ENCODE measurements at regions of chr20 and their contacts with region 1.

Region 1: DNA sequence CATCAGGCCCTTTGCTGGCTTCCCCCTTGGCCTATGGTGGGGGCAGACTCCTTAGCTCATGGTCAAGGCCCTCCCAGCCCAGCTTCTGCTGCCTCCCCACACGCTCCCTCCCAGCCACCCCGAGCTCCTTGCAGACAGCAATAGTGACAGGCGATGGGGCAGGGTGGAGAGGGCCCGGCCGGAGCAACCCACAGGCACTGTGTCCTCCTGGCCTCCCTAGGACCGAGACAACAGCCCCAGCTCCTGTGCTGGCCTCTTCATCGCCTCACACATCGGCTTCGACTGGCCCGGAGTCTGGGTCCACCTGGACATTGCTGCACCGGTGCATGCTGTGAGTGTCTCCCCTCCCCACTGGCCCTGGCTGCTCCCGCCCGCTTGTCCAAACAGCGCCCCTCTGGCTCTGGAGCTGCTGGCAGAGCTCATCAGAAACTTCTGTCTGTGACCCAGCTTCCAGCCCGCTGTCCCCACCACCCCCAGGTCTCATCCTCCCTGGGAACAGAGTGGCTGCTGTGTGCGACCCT is 21.8 kb downstream of the NPEPL1 start:
- DNase-seq: peak in 4 of 5 donors; percentile 7 to 52 (median 16)
- ATAC-seq: no peak
- H3K4me3 ChIP-seq: no peak overlapping the region
- H3K27ac ChIP-seq: no peak overlapping the region
- H3K4me1 ChIP-seq: no peaks in the 10 kb centered on the region
- H3K27me3 ChIP-seq: no peaks in the 10 kb centered on the region
- CTCF ChIP-seq: no peak
- POLR2A ChIP-seq: no peak

Region 2: DNA sequence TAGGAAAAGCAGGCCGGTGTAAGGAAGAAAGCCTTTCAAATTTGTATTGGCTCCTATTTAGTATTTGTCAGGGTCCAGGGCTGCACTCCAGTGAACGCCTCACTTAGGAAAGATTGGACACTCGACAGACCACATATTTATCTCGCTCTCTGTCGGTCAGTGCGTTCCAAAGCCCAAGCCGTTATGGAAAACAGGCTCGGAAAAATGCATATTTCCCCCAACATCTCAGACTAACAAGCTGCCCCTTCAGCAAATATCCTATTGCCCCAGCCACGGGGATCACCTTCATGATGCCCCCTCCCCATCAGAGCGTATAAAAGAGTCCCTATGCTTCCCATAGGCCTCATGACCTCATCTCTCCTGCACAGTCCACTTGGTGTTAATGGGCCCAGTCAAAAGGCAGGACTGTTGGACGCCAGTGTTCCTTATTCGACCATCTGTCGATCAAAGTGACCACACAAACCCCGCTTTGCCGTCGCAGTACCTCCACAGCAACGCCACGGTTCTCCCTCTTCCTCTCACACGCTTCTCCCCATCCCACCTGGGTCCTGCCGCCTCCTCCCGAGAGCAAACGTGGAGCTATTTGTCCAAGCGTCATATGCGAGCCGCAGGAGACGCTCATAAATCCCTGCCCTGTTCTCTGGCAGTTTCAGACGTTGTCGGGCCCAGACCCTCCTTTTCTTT is 41.5 kb after region 1 on chr20:
- intact Hi-C with region 1: loop called in 1 of 10 experiments (anchors 5 kb)
- DNase-seq: no peak
- ATAC-seq: no peak
- H3K4me3 ChIP-seq: no peak overlapping the region
- H3K27ac ChIP-seq: no peak overlapping the region
- H3K4me1 ChIP-seq: no peaks in the 10 kb centered on the region
- H3K27me3 ChIP-seq: peaks cover 0 to 31% (median 0%) of the 10 kb centered on the region in 9 donors
- CTCF ChIP-seq: no peak
- POLR2A ChIP-seq: no peak